ENCODE measurements at regions of chr4 and their contacts with region 1.

Region 1: DNA sequence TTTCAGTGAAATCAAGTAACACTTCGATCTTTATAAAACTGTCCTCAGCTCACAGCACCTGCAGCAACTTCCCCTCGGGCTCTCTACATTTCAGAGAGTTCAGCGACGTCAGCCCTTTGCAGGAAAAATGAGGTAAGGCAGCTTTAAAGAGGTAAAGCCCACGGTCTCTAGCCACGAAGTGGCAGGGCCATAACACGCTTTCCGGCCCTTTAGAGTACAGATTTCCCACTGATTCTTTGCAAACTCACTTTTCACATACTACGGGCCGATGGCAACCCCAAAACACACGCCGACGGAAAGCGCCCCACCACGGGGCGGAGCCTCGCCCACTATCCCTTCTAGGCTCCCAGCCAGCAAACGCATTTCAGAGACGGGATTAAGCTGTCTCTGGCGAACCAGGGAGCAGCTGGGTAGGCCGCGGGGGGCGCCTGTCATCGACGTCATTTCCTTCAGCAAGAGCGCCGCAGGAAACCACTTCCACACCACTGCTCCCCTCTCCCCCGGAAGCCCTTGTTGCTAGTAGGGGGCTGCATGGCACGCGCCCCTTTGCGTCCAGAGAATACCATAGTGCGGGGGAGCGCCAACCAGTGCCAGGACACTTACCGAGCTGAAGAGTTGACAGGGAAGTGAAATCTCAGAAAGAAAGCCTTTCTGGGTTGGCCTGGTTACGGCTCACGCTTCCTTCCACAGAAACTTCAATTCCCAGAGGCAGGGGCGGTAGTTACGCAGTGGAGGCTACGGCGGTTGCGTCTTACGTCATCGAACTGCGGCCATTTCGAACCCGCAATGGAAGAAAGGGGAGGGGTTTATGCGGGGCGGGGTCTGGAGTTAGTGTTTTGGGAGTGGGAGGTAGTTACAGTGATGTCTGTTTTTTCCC is at the start of gene TRMT10A:
- DNase-seq: peak; percentile 98
- ATAC-seq: peak; percentile 93
- H3K4me3 Mint-ChIP-seq: peak within 1 kb of the TSS; percentile 89
- H3K27ac Mint-ChIP-seq: peak within 1 kb of the TSS; percentile 95
- H3K4me1 Mint-ChIP-seq: peaks cover 12% of the 10 kb centered on the region
- H3K27me3 Mint-ChIP-seq: peaks cover 14% of the 10 kb centered on the region
- total RNA-seq, gene TRMT10A: 7.8 to 9.8 TPM

Region 2: DNA sequence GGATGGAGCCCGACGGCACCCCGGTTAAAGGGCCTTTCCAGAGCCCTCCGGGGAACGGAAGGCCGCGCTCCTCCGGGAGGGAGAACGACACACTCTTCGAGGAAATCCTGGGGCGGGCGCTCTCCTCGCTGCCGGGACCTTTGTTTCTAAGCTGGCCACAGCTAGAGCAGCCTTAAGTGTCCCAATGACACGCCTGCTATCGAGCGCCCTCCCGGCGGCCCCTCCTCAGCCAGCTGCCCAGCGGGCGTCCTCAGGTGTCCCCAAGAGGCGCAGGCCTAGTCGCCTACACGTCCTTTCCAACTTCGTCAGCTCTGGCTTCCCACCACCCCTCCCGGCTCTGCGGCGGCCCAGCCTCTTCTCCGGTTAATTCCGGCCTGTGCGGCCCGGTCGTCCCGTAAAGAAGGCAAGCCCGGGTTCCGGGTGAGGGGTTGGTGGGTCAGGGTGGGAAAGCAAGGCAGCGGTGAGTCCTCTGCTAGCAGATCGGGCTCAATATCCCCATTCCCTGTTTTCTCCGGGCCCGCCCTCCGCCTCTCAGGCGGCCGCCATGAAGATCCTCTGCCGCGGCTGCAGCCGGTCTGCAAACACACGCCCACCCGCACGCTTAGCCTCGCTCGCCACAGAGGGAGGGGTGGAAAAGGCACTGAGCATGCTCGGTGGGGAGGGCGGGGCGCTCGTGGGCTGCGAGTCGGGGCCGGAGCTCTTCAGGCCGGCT is 1302.8 kb before region 1 on chr4:
- CTCF ChIA-PET with region 1: no interaction called
- POLR2A ChIA-PET with region 1: no interaction called
- intact Hi-C with region 1: loop called in 1 of 2 experiments (anchors 5 kb)
- DNase-seq: peak; percentile 97
- ATAC-seq: peak; percentile 89
- H3K4me3 Mint-ChIP-seq: peak overlapping the region; percentile 91
- H3K27ac Mint-ChIP-seq: peak overlapping the region; percentile 95
- H3K4me1 Mint-ChIP-seq: peaks cover 49% of the 10 kb centered on the region
- H3K27me3 Mint-ChIP-seq: no peaks in the 10 kb centered on the region

Region 3: DNA sequence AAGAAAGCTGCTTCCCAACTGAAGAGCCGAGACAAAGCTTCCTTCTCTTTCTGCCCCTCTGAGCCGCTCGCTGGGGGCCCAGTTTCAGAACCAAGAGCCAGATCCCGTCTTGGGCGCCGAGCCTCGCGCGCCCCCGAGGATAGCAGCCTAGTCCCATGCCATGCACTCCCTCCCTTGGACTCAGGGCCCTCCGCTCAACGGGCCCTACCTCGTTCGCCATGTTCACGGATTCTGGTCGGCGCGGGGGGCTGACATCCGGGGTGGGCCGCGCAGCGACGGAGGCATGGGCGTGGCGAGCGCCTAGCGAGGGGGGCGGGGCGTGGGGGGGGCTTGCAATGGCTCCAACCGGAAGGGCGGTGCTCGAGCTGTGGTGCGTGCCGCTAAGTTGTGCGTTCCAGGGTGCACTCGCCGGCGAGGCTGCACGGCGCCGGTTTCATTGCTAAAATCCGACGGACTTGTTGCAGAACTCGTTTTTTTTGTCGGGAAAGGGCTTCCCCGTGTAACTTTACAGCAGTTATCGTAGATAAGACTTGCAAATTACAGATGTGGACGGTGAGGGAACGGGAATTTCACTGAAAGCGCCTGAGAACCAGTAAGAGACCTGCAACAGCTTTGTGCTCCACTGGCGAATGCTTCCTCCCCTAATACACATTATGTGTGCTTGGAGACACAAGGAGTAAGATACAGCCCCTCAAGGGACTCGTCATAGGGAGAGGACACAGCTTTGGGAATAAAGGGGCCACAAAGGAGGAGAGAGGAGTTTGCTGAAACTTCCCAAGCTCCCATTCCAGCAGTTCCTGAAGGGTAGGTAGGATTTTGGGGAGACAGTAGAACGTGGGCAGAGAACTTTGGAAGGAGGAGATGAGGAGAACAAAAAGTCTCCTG is 474.8 kb before region 1 on chr4 and contains the start of gene ADH5:
- CTCF ChIA-PET with region 1: no interaction called
- POLR2A ChIA-PET with region 1: no interaction called
- intact Hi-C with region 1: loop called in 1 of 2 experiments (anchors 1 kb)
- DNase-seq: peak; percentile 96
- ATAC-seq: peak; percentile 97
- H3K4me3 Mint-ChIP-seq: peak within 1 kb of the TSS; percentile 98
- H3K27ac Mint-ChIP-seq: peak within 1 kb of the TSS; percentile 99
- H3K4me1 Mint-ChIP-seq: peaks cover 42% of the 10 kb centered on the region
- H3K27me3 Mint-ChIP-seq: no peaks in the 10 kb centered on the region
- total RNA-seq, gene ADH5: 81.3 to 119 TPM

Region 4: GRCh38 chr4:99763635-99764101 is 200.1 kb after region 1 on chr4:
- CTCF ChIA-PET with region 1: no interaction called
- POLR2A ChIA-PET with region 1: no interaction called
- intact Hi-C with region 1: loop called (anchors 2 to 5 kb)
- DNase-seq: peak; percentile 53
- ATAC-seq: peak; percentile 96
- H3K4me3 Mint-ChIP-seq: no peak overlapping the region
- H3K27ac Mint-ChIP-seq: no peak overlapping the region
- H3K4me1 Mint-ChIP-seq: peaks cover 34% of the 10 kb centered on the region
- H3K27me3 Mint-ChIP-seq: peaks cover 10% of the 10 kb centered on the region

Region 5: GRCh38 chr4:99855678-99856077 is 292.1 kb after region 1 on chr4:
- CTCF ChIA-PET with region 1: no interaction called
- POLR2A ChIA-PET with region 1: no interaction called
- intact Hi-C with region 1: loop called in 1 of 2 experiments (anchors 1 kb)
- DNase-seq: peak; percentile 49
- ATAC-seq: peak; percentile 16
- H3K4me3 Mint-ChIP-seq: no peak overlapping the region
- H3K27ac Mint-ChIP-seq: peak overlapping the region; percentile 70
- H3K4me1 Mint-ChIP-seq: peaks cover 67% of the 10 kb centered on the region
- H3K27me3 Mint-ChIP-seq: no peaks in the 10 kb centered on the region

Region 6: GRCh38 chr4:99949034-99949998 is 385.8 kb after region 1 on chr4:
- CTCF ChIA-PET with region 1: interaction called, 3 read pairs
- POLR2A ChIA-PET with region 1: interaction called, 4 read pairs
- intact Hi-C with region 1: loop called (anchors 1 kb)
- DNase-seq: peak; percentile 96
- ATAC-seq: peak; percentile 52
- H3K4me3 Mint-ChIP-seq: no peak overlapping the region
- H3K27ac Mint-ChIP-seq: no peak overlapping the region
- H3K4me1 Mint-ChIP-seq: peaks cover 33% of the 10 kb centered on the region
- H3K27me3 Mint-ChIP-seq: no peaks in the 10 kb centered on the region

Region 7: DNA sequence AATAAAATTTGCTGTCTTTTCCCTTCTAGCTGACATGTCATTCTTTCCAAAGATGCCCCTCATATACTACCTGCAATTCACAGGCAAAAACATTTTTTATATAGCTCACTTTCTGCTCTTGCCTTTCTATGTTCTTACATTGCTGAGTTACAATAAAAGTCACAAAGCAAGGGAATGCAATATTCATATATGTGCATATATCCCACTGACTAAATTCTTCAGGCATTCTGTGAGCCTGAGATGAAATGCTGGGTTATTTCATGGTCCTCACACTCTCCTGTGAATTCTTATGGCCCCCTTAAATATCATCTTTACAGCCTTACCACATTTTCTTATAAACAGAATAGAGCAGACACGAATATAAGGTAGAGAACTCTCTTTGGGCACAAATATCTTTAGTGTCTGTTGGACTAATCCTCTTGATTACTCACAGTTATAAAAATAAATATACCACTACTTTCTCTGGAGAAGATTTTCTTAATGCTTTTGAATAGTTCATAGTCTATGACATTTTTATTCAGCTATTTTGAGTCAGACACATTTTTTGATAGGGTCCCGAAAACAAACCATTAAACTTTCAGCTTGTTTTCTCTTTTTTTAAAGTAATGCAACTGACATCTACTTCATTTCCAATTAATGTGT is 470.6 kb after region 1 on chr4:
- CTCF ChIA-PET with region 1: no interaction called
- POLR2A ChIA-PET with region 1: no interaction called
- intact Hi-C with region 1: no loop called
- DNase-seq: no peak
- ATAC-seq: no peak
- H3K4me3 Mint-ChIP-seq: no peak overlapping the region
- H3K27ac Mint-ChIP-seq: no peak overlapping the region
- H3K4me1 Mint-ChIP-seq: no peaks in the 10 kb centered on the region
- H3K27me3 Mint-ChIP-seq: peaks cover 5% of the 10 kb centered on the region

Region 8: DNA sequence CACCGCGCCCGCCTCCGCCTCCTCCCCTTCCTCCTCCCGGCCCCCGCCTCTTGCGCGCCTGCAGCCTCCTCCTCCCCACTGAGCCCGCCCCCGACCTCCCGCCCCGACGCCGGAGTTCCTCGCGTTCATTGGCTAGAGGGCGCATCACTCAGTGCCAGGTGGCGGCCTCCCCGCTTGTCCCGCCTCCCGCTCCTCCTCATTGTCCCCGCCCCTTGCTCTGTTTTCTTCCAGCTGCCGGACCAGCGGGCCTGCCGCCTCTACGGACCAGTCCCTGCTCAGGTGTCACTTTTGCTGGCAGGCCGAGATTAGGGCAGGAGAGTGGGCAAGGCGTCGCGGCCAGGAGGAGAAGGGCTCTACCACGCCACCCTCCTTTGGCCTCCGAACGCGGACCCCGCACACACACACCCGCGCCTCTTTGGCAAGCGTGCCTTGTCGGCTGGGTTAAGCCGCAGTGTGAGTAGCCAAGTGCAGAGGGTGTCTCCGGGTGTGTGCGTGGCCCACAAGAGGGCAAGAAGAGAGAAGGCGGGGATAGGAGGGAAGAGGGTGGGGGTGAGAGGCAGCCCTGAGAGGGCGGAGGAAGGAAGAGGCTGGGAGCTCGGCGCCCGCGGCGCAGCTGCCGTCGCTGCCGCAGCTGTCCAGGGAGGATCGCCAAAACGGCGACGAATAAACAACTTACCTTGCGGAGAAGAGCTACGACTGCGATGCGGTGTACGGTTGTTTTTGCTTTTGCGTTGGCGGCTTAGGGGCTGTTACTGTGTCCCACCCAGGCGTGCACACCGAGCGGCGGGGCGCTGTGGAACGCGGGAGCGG is 1784.2 kb after region 1 on chr4:
- CTCF ChIA-PET with region 1: no interaction called
- POLR2A ChIA-PET with region 1: no interaction called
- intact Hi-C with region 1: loop called in 1 of 2 experiments (anchors 5 kb)
- DNase-seq: peak; percentile 99
- ATAC-seq: peak; percentile 95
- H3K4me3 Mint-ChIP-seq: peak overlapping the region; percentile 90
- H3K27ac Mint-ChIP-seq: peak overlapping the region; percentile 77
- H3K4me1 Mint-ChIP-seq: peaks cover 28% of the 10 kb centered on the region
- H3K27me3 Mint-ChIP-seq: peaks cover 22% of the 10 kb centered on the region

Measured in activated CD4-positive, alpha-beta T cell treated with anti-CD3 and anti-CD28 coated beads for 36 hours (primary cell).